Prostate gland (tissue), 2 donors: ENCODE measurements at regions of chr2 and their contacts with region 1.

Region 1: GRCh38 chr2:11411768-11412448 is 54.1 kb downstream of the E2F6 start:
- DNase-seq: peak; percentile 32
- H3K4me3 ChIP-seq: no peak overlapping the region
- H3K27ac ChIP-seq: no peak overlapping the region
- H3K4me1 ChIP-seq: no peaks in the 10 kb centered on the region
- H3K27me3 ChIP-seq: no peaks in the 10 kb centered on the region
- CTCF ChIP-seq: peak; percentile 61 to 78 (median 68)
- POLR2A ChIP-seq: no peak

Region 2: DNA sequence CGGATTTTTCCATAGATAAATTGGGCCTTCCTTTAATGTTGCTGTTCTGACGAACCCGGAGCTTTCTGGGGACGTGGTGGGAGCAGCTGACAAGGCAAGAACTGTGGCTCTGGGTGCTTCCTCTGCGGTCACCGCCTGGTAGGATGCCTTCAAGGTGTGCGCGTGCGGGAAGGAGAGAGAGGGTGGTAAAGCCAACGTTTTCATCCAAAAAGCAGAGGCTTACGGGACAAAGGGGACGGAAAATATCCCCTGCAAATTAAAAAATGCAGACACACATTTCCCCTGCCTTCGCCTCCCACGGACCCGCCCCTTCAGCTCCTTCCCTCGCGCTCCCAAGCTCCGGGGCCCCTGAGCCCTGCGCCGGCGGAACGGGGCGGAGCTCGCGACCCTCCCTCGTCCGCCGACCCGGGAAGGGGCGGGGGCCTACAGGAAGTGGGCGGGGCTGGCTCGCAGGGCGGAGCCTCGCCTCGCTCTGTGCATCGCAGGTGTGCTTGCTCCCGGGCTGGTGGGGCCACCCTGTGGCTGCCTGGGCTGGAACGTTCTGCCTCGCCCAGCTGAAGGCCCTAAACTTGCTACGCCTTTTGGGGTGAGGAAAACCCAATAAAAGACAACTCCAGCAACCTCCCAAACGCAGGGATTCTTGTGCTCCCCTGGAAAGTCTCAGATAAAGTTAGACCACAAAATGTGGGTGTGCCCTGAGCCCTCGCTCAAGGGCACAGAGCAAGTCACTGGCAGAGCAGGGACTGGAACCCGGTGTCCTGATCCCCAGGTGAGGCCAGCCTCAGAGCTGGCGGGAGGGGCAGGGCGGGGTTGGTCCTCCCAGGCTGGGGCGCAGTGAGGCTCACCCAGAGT is 282.1 kb before region 1 on chr2:
- intact Hi-C with region 1: loop called (anchors 5 kb)
- DNase-seq: peak; percentile 76
- H3K4me3 ChIP-seq: peak overlapping the region; percentile 25 to 32
- H3K27ac ChIP-seq: peak overlapping the region; percentile 52 to 60
- H3K4me1 ChIP-seq: peaks cover 7% of the 10 kb centered on the region
- H3K27me3 ChIP-seq: no peaks in the 10 kb centered on the region
- CTCF ChIP-seq: peak in 3 of 4 experiments; percentile 30 to 62 (median 57)
- POLR2A ChIP-seq: peak; percentile 24

Region 3: DNA sequence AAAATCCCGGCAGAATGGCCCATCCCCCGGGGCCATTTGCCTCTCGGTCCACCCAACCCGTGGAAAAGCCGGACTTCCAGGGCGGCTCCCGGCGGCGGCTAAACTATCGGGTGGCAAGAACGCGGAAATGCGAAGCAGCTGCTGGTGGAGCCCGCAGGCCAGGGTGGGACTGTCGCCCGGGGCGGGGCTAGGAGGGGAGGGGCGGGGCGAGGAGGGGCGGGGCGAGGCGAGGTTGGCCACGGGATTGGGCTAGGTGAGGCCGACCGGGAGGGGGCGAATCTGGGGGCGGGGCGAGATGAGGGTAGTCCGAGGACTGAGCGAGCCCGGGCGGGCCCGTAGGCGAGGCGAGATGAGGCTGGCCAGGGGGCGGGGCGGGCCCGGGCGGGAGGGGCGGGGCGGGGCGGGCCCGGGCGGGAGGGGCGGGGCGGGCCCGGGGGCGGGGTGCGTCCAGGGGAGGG is 257.0 kb before region 1 on chr2:
- intact Hi-C with region 1: loop called (anchors 5 kb)
- DNase-seq: peak; percentile 98
- H3K4me3 ChIP-seq: peak overlapping the region; percentile 59 to 69
- H3K27ac ChIP-seq: peak overlapping the region; percentile 84 to 90
- H3K4me1 ChIP-seq: no peaks in the 10 kb centered on the region
- H3K27me3 ChIP-seq: no peaks in the 10 kb centered on the region
- CTCF ChIP-seq: no peak
- POLR2A ChIP-seq: no peak

Region 4: GRCh38 chr2:11234309-11234708 is 177.6 kb before region 1 on chr2:
- intact Hi-C with region 1: loop called (anchors 2 kb)
- DNase-seq: no peak
- H3K4me3 ChIP-seq: no peak overlapping the region
- H3K27ac ChIP-seq: no peak overlapping the region
- H3K4me1 ChIP-seq: no peaks in the 10 kb centered on the region
- H3K27me3 ChIP-seq: no peaks in the 10 kb centered on the region
- CTCF ChIP-seq: peak in 3 of 4 experiments; percentile 52 to 67 (median 66)
- POLR2A ChIP-seq: no peak